ENCODE measurements at regions of chr1 and their contacts with region 1.

Region 1: DNA sequence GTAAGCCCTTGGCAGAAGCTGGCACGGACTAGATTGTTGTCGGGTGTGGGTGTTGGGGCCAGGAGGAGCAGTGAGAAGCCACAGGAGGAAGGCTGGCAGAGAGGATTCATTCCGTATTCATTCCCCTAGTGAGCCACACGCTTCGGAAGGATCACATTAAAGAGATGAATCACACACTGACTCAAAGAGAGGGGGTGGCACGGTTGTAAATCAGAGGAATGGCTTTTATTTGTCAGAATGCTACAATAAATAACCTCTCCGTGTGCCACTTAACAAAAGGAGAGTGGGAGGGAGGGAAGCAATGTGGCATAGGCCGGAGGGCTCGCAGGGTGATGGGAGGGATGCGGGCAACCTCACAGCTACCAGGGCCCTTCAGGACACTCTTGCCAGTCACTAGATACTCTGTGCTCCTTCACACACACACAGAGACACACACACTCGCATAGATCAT is 135.5 kb downstream of the HIVEP3 start:
- DNase-seq: no peak
- H3K4me3 ChIP-seq: no peak overlapping the region
- H3K27ac ChIP-seq: no peak overlapping the region
- H3K4me1 ChIP-seq: peaks cover 0 to 22% (median 20%) of the 10 kb centered on the region in 4 donors
- H3K27me3 ChIP-seq: no peaks in the 10 kb centered on the region
- CTCF ChIP-seq: no peak
- EP300 ChIP-seq: no peak
- POLR2A ChIP-seq: no peak

Region 2: GRCh38 chr1:41573785-41574713 is 209.2 kb before region 1 on chr1:
- intact Hi-C with region 1: loop called (anchors 10 kb)
- DNase-seq: peak; percentile 81
- H3K4me3 ChIP-seq: no peak overlapping the region
- H3K27ac ChIP-seq: no peak overlapping the region
- H3K4me1 ChIP-seq: no peaks in the 10 kb centered on the region
- H3K27me3 ChIP-seq: no peaks in the 10 kb centered on the region
- CTCF ChIP-seq: peak; percentile 54 to 77 (median 76)
- EP300 ChIP-seq: no peak
- POLR2A ChIP-seq: no peak

Region 3: GRCh38 chr1:41698916-41699860 is 84.0 kb before region 1 on chr1:
- intact Hi-C with region 1: no loop called
- DNase-seq: no peak
- H3K4me3 ChIP-seq: no peak overlapping the region
- H3K27ac ChIP-seq: no peak overlapping the region
- H3K4me1 ChIP-seq: no peaks in the 10 kb centered on the region
- H3K27me3 ChIP-seq: no peaks in the 10 kb centered on the region
- CTCF ChIP-seq: no peak
- EP300 ChIP-seq: no peak
- POLR2A ChIP-seq: no peak